ENCODE measurements at regions of chr10 and their contacts with region 1.

Region 1: GRCh38 chr10:42960491-42960990 is 116.3 kb upstream of the RET start:
- DNase-seq: peak; percentile 59
- H3K4me3 ChIP-seq: no peak overlapping the region
- H3K27ac ChIP-seq: no peak overlapping the region
- H3K4me1 ChIP-seq: peaks cover 16% of the 10 kb centered on the region
- H3K27me3 ChIP-seq: no peaks in the 10 kb centered on the region
- CTCF ChIP-seq: no peak

Region 2: GRCh38 chr10:42552493-42553407 is 407.8 kb before region 1 on chr10:
- CTCF ChIA-PET with region 1: no interaction called
- dilution Hi-C with region 1: no loop called
- in situ Hi-C with region 1: no loop called
- intact Hi-C with region 1: no loop called
- DNase-seq: peak; percentile 96
- H3K4me3 ChIP-seq: peak overlapping the region; percentile 72 to 93 (median 82)
- H3K27ac ChIP-seq: peak overlapping the region; percentile 30
- H3K4me1 ChIP-seq: peaks cover 13% of the 10 kb centered on the region
- H3K27me3 ChIP-seq: no peaks in the 10 kb centered on the region
- CTCF ChIP-seq: no peak

Region 3: DNA sequence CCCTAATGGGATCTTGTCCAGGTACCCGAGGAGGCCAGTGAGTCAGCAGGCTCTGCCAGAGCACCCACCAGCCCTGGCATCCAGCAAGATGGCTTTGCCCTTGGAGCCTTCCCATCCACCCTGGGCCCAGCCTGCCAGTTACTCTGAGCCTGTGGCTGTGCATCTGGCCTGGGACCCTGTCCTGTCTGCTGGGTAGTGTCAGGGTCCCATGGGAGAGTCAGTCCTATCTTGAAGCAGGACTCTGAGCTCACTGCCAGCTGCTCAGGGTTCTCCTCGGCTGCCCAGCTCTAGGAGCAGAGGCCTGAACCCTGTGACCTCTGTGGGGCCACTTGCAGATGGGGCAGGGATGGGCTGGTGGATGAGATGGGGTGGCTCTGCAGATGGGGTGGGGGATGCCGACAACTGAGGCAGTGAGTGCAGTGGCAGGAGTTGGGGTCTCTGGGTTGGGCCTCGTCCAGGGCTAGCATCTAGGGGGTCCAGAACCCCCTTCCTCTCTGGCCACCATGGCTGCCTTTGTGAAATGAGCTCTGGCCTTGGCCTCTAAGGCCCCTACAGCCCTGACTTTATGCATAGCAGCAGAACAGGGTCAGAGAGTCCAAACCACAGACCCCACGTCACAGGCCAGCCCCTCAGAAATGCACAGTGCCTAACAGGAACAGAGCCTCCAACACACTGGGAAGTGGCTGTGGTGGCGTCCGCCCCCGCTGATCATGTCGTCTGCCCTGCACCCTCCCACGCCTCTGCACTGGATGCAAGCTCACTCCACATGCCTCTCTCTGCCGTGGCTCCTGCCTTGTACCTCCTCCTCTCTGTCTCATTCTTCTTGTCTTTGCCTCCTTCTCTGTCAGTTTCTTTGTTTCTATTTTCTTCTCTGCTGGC is 28.2 kb after region 1 on chr10:
- CTCF ChIA-PET with region 1: no interaction called
- dilution Hi-C with region 1: no loop called
- in situ Hi-C with region 1: no loop called
- intact Hi-C with region 1: no loop called
- DNase-seq: no peak
- H3K4me3 ChIP-seq: no peak overlapping the region
- H3K27ac ChIP-seq: no peak overlapping the region
- H3K4me1 ChIP-seq: no peaks in the 10 kb centered on the region
- H3K27me3 ChIP-seq: no peaks in the 10 kb centered on the region
- CTCF ChIP-seq: no peak

Region 4: DNA sequence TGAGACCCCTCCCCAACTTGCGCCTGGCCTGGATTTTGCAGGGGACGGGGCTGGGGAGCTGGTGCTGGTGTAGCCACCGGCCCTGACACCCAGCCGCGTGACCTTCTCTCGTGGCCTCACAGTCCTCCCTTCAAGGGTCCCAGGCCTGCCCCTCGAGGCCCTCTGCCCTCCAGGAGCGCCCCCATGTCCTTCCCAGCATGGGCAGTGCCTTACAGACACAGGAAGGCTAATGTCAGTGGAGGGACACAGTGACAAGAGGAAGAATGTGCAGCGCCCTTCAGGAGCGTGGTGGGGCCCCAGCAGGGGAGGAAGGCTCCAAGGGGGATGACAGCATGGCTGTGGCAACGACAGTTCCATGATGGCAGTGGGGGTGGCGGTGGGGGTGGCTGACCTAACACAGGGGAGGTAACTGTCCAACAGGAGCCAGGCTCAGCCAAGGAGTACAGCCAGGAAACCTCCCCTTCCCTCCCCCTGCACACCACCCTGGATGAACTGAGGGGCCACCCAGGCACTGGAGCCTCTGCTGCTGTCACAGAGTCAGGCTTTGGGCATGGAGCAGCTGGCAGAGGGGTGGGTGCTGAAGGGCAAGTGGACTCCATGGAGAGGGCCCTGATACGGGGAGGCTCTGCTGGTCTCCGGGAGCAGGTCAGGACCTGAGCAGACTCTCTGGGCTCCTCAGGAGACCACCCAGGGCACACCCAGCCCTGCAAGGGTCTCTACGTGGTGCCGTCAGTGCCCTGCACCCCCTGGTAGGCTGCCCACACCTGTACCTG is 40.3 kb after region 1 on chr10:
- CTCF ChIA-PET with region 1: no interaction called
- dilution Hi-C with region 1: no loop called
- in situ Hi-C with region 1: no loop called
- intact Hi-C with region 1: no loop called
- DNase-seq: no peak
- H3K4me3 ChIP-seq: no peak overlapping the region
- H3K27ac ChIP-seq: no peak overlapping the region
- H3K4me1 ChIP-seq: no peaks in the 10 kb centered on the region
- H3K27me3 ChIP-seq: peaks cover 2% of the 10 kb centered on the region
- CTCF ChIP-seq: no peak

Region 5: GRCh38 chr10:43078987-43079275 is 118.4 kb after region 1 on chr10:
- CTCF ChIA-PET with region 1: no interaction called
- dilution Hi-C with region 1: no loop called
- in situ Hi-C with region 1: no loop called
- intact Hi-C with region 1: loop called (anchors 10 kb)
- DNase-seq: no peak
- H3K4me3 ChIP-seq: no peak overlapping the region
- H3K27ac ChIP-seq: no peak overlapping the region
- H3K4me1 ChIP-seq: peaks cover 4% of the 10 kb centered on the region
- H3K27me3 ChIP-seq: peaks cover 8% of the 10 kb centered on the region
- CTCF ChIP-seq: peak; percentile 36 to 65

Measured in mammary epithelial cell (primary cell).